HEK293T (cell line): ENCODE measurements at regions of chr17 and their contacts with region 1.

Region 1: GRCh38 chr17:21119247-21119918 is 7.4 kb upstream of the DHRS7B start:
- DNase-seq: peak; percentile 76

Region 2: GRCh38 chr17:21108651-21109050 is 10.7 kb before region 1 on chr17:
- CTCF ChIA-PET with region 1: interaction called, 11 read pairs
- POLR2A ChIA-PET with region 1: interaction called, 3 read pairs
- DNase-seq: no peak